ENCODE measurements at regions of chr17 and their contacts with region 1.

Region 1: GRCh38 chr17:13002766-13003451 is 14.9 kb downstream of the ELAC2 start:
- DNase-seq: peak; percentile 44
- H3K4me3 Mint-ChIP-seq: no peak overlapping the region
- H3K27ac Mint-ChIP-seq: no peak overlapping the region
- H3K4me1 Mint-ChIP-seq: no peaks in the 10 kb centered on the region
- H3K27me3 Mint-ChIP-seq: no peaks in the 10 kb centered on the region

Region 2: DNA sequence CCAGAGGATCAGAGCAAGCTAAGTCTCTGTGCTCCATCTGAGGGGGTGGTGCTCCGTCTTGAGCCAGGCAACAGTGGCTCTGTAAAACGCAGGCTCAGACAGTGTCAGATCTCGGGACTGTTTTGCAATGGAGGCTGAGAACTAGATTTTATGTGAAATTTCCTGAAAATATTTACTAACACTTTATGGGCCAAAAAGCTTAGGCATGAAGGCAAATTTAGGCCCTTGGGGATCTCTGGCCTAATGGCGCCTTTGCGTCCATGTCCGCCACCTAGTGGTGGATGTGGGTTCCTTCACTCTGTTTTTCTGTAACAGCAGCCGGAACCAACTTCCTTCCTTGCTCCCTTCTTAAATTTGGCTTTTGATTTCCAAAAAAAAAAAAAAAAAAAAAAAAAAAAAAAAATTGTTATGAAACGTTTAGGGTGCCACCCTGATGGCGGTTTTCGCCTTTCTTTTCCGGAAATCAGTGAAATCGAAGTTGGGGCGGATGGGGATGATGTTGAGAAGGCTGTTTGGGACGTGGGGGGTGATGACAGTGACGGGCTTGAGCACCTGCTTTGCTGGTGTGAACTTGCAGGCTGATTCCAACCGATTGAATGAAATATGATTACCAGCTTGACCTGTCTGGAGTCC is 28.9 kb after region 1 on chr17:
- CTCF ChIA-PET with region 1: interaction called, 15 read pairs
- POLR2A ChIA-PET with region 1: no interaction called
- DNase-seq: peak; percentile 55
- H3K4me3 Mint-ChIP-seq: no peak overlapping the region
- H3K27ac Mint-ChIP-seq: no peak overlapping the region
- H3K4me1 Mint-ChIP-seq: peaks cover 4% of the 10 kb centered on the region
- H3K27me3 Mint-ChIP-seq: peaks cover 4% of the 10 kb centered on the region